ENCODE measurements at regions of chr5 and their contacts with region 1.

Region 1: DNA sequence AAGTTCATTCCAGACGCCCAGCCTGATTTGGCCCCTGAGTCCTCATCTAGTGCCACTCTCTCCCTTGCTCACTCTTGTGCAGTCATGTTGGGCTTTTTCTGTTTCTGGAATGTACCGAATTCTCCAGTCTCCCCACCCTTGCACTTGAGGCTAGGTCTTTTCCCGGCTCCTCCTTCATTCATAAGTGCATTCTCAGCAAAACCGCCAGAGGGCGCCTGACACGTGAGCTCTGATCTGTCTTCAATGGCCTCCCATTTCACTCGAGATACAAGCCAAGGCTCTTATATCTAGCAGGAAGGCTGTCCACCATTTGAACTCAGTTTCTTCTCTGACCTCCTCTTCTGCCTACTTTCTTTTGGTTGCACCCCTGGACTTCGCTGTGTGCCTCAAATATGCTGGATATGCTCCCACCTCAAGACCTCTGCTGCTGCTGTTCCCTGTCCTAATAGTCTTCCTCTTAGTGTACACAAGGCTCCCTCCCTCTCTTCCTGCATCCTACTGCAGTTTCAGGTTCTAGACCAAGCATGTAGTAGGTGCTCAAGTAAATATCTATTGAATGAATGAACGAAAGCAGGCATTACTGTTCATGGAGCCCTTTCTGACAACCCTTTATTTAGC is 568.1 kb upstream of the WWC1 start:
- DNase-seq: peak; percentile 74 to 81
- H3K4me3 ChIP-seq: no peak overlapping the region
- H3K4me3 Mint-ChIP-seq: no peak overlapping the region
- H3K27ac Mint-ChIP-seq: no peak overlapping the region
- H3K4me1 ChIP-seq: peaks cover 3% of the 10 kb centered on the region; the same call in 1 of the 2 replicates
- H3K4me1 Mint-ChIP-seq: peaks cover 22% of the 10 kb centered on the region
- H3K27me3 ChIP-seq: no peaks in the 10 kb centered on the region
- H3K27me3 Mint-ChIP-seq: no peaks in the 10 kb centered on the region
- CTCF ChIP-seq: peak; percentile 88 to 93

Region 2: DNA sequence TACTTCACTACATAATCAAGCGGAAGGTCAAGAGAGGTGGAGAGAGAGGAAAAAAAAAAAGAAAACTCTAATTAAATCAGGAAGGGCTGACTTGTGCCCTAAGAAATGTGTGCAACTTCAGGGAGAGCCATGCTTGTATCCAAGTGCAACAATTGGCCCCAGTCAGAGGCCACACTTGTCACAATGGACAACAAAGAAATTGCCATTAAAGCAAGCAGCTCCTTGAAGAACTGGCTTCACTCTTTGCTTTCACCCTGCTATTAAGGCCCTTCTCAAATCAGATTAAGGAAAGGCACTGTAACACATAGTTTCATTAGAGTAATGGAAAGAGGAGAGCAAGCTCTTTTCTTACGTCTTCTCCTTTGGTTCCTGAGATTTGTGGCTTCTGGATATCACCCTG is 87.2 kb after region 1 on chr5:
- CTCF ChIA-PET with region 1: no interaction called
- POLR2A ChIA-PET with region 1: no interaction called
- intact Hi-C with region 1: loop called (anchors 1 kb)
- DNase-seq: no peak
- H3K4me3 ChIP-seq: no peak overlapping the region
- H3K4me3 Mint-ChIP-seq: peak overlapping the region; percentile 23
- H3K27ac Mint-ChIP-seq: peak overlapping the region; percentile 17
- H3K4me1 ChIP-seq: peaks cover 47% of the 10 kb centered on the region
- H3K4me1 Mint-ChIP-seq: peaks cover 41% of the 10 kb centered on the region
- H3K27me3 ChIP-seq: no peaks in the 10 kb centered on the region
- H3K27me3 Mint-ChIP-seq: no peaks in the 10 kb centered on the region
- CTCF ChIP-seq: no peak

Region 3: DNA sequence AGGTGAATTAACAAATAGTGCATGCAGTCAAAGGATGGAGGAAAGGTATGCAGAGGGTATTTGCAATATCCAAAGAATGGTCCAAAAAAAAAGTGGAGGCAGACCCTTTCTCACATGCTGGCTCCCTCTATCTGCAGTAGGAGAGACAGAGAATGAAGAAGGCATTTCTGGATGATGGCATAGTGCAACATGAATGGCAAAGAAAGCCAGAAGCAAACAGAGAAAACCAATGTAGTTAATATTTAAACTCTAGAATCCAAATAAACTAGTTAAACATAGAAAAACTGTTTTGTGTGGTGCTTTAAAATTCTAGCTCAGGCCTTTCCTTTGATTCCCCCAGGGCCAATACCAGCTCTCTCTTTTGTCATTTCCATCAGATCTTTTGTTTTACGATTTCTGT is 165.0 kb after region 1 on chr5:
- CTCF ChIA-PET with region 1: interaction called, 5 read pairs
- POLR2A ChIA-PET with region 1: no interaction called
- intact Hi-C with region 1: loop called (anchors 1 kb)
- DNase-seq: peak in 1 of 2 experiments; percentile 28
- H3K4me3 ChIP-seq: no peak overlapping the region
- H3K4me3 Mint-ChIP-seq: no peak overlapping the region
- H3K27ac Mint-ChIP-seq: no peak overlapping the region
- H3K4me1 ChIP-seq: peaks cover 5% of the 10 kb centered on the region
- H3K4me1 Mint-ChIP-seq: peaks cover 13% of the 10 kb centered on the region
- H3K27me3 ChIP-seq: no peaks in the 10 kb centered on the region
- H3K27me3 Mint-ChIP-seq: no peaks in the 10 kb centered on the region
- CTCF ChIP-seq: peak in 1 of 2 experiments; percentile 46

Region 4: DNA sequence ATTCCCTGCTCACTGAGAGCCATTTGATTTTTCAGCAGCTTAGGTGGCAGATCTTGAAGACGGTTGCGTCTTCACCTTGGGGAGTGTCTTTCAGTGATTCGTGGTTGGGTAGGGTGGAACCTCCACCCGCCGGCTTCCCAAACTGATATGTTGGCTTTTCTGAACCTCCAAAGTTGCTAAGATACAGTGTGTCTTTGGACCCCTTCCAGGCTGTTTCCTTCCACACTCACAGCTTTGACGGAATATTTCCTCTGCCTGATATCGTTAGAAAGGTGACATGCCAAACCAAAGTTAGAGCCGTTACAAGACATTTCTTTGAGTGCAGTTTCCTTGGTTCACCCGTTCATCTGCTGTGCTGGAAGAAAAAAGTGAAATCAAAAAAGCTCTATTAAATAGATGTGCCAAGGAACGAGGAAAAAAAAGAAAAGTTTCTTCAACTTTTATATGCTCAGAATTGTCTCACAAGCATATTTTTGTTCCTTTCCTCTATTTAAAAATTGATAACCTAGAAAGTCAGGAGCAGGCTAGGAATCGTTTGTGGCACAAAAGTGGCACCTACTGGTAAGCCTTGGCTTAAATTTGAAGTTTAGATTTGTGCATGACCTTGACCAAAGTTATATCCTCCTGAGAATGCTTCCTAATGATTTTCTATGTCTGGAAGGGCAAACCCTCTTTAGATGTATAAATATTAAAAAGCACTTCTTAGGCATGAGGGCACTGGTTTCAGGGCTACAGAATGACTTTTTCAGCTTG is 297.4 kb after region 1 on chr5:
- CTCF ChIA-PET with region 1: no interaction called
- POLR2A ChIA-PET with region 1: no interaction called
- intact Hi-C with region 1: loop called (anchors 1 kb)
- DNase-seq: no peak
- H3K4me3 ChIP-seq: no peak overlapping the region
- H3K4me3 Mint-ChIP-seq: no peak overlapping the region
- H3K27ac Mint-ChIP-seq: no peak overlapping the region
- H3K4me1 ChIP-seq: no peaks in the 10 kb centered on the region
- H3K4me1 Mint-ChIP-seq: no peaks in the 10 kb centered on the region
- H3K27me3 ChIP-seq: no peaks in the 10 kb centered on the region
- H3K27me3 Mint-ChIP-seq: peaks cover 31% of the 10 kb centered on the region
- CTCF ChIP-seq: peak in 1 of 2 experiments; percentile 6

Region 5: GRCh38 chr5:168047043-168047668 is 323.8 kb after region 1 on chr5:
- CTCF ChIA-PET with region 1: interaction called, 6 read pairs
- POLR2A ChIA-PET with region 1: no interaction called
- intact Hi-C with region 1: loop called (anchors 1 kb)
- DNase-seq: peak; percentile 59 to 68
- H3K4me3 ChIP-seq: no peak overlapping the region
- H3K4me3 Mint-ChIP-seq: no peak overlapping the region
- H3K27ac Mint-ChIP-seq: no peak overlapping the region
- H3K4me1 ChIP-seq: no peaks in the 10 kb centered on the region; the same call in 1 of the 2 replicates
- H3K4me1 Mint-ChIP-seq: no peaks in the 10 kb centered on the region
- H3K27me3 ChIP-seq: no peaks in the 10 kb centered on the region
- H3K27me3 Mint-ChIP-seq: peaks cover 21% of the 10 kb centered on the region
- CTCF ChIP-seq: peak; percentile 66 to 71